ENCODE measurements at regions of chr11 and their contacts with region 1.

Region 1: GRCh38 chr11:101466352-101466751 is 117.5 kb downstream of the TRPC6 start:
- DNase-seq: no peak
- H3K4me3 ChIP-seq: no peak overlapping the region
- H3K27ac ChIP-seq: no peak overlapping the region
- H3K4me1 ChIP-seq: no peaks in the 10 kb centered on the region
- H3K27me3 ChIP-seq: no peaks in the 10 kb centered on the region
- CTCF ChIP-seq: no peak

Region 2: GRCh38 chr11:101848262-101848661 is 381.9 kb after region 1 on chr11:
- intact Hi-C with region 1: loop called (anchors 10 kb)
- DNase-seq: no peak
- H3K4me3 ChIP-seq: no peak overlapping the region
- H3K27ac ChIP-seq: no peak overlapping the region
- H3K4me1 ChIP-seq: no peaks in the 10 kb centered on the region
- H3K27me3 ChIP-seq: no peaks in the 10 kb centered on the region
- CTCF ChIP-seq: peak; percentile 27 to 36

Measured in tibial artery (tissue), 4 donors.